ENCODE measurements at regions of chr11 and their contacts with region 1.

Region 1: DNA sequence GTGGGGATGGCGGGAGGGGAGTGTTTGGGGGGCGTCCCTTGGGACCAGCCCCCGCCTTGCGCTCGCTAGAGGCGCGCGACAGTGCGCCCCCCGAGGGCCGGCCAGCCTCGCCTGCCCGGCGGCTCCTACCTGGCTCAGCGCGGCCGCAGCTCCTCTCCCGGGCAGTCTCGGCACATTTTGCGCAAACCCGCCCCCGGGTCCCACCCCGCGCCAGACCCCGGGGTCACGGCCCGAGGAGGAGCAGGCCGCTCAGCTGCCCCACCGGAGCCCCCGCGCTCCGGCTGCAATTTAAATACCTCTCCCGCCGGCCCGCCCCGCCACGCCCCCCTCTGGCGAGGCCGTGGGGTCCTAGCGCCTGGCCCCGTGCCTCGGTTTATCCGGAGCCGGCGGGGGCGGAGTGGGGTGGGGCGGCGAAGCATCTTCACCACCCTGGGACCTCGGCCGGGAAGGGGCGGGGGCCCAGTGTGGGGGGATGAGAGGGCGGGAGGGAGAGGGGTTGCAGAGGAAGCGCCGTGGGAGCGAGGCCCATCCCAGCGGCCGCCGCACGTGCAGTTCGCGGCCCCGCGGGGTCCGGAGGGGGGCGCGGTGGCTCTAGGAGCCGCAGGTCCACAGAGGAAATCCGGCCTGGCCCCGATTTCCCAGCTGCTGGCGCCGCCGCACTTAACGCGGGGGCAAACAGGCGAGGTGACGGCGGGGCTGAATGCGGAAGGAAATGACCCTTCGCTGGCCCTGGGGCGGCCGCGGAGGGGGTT is at the start of gene LRRC32:
- DNase-seq: peak in 2 of 3 donors; percentile 74 to 82
- H3K4me3 ChIP-seq: peak within 1 kb of the TSS in 5 of 7 experiments; percentile 13 to 61 (median 52)
- H3K27ac ChIP-seq: no peak within 1 kb of the TSS
- H3K4me1 ChIP-seq: peaks cover 8 to 55% (median 36%) of the 10 kb centered on the region in 4 experiments
- H3K27me3 ChIP-seq: peaks cover 0 to 32% (median 10%) of the 10 kb centered on the region in 5 experiments

Region 2: DNA sequence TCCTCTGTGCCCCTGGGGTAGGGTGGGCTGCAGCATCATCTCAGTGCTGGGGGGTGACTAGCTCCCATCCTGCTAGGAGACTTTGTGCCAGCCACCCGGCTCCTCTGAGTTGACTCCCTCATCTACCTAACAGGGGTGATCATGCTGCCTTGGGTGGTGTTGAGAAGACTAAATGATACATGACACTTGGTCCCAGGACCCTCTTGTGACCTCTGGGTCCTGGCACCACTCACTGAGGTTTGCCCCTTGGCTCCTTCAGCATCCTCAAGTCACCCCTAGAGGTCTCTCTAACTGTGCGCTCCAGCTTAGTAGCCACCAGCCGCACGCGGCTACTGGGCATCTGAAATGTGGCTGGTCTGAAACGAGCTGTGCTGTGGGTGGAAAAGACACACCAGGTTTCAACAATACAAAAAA is 72.2 kb before region 1 on chr11:
- CTCF ChIA-PET with region 1: interaction called, 192 read pairs
- POLR2A ChIA-PET with region 1: no interaction called
- DNase-seq: peak; percentile 44 to 69 (median 65)
- H3K4me3 ChIP-seq: no peak overlapping the region
- H3K27ac ChIP-seq: no peak overlapping the region
- H3K4me1 ChIP-seq: peaks cover 0 to 15% (median 12%) of the 10 kb centered on the region in 4 experiments
- H3K27me3 ChIP-seq: peaks cover 0 to 2% (median 0%) of the 10 kb centered on the region in 5 experiments

Region 3: DNA sequence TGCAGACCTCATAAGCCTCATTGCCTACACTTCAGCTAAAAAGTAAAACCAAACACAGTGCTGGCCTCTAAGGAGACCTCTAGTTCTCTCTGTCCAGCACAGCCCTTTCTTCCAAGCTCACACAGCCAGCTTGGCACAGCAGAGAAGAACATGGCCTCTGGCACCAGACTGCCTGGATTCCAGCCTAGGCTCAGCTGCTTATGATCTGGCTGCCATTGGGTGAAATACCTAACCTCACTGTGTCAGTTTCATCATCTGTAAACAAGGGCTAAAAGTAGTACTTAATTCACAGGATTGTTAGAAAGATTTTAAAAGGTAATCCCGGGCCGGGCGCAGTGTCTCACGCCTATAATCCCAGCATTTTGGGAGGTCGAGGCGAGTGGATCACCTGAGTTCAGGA is 180.2 kb after region 1 on chr11:
- CTCF ChIA-PET with region 1: no interaction called
- POLR2A ChIA-PET with region 1: no interaction called
- DNase-seq: no peak
- H3K4me3 ChIP-seq: no peak overlapping the region
- H3K27ac ChIP-seq: no peak overlapping the region
- H3K4me1 ChIP-seq: peaks cover 0 to 16% (median 0%) of the 10 kb centered on the region in 4 experiments
- H3K27me3 ChIP-seq: peaks cover 0 to 4% (median 0%) of the 10 kb centered on the region in 5 experiments